ENCODE measurements at regions of chr17 and their contacts with region 1.

Region 1: DNA sequence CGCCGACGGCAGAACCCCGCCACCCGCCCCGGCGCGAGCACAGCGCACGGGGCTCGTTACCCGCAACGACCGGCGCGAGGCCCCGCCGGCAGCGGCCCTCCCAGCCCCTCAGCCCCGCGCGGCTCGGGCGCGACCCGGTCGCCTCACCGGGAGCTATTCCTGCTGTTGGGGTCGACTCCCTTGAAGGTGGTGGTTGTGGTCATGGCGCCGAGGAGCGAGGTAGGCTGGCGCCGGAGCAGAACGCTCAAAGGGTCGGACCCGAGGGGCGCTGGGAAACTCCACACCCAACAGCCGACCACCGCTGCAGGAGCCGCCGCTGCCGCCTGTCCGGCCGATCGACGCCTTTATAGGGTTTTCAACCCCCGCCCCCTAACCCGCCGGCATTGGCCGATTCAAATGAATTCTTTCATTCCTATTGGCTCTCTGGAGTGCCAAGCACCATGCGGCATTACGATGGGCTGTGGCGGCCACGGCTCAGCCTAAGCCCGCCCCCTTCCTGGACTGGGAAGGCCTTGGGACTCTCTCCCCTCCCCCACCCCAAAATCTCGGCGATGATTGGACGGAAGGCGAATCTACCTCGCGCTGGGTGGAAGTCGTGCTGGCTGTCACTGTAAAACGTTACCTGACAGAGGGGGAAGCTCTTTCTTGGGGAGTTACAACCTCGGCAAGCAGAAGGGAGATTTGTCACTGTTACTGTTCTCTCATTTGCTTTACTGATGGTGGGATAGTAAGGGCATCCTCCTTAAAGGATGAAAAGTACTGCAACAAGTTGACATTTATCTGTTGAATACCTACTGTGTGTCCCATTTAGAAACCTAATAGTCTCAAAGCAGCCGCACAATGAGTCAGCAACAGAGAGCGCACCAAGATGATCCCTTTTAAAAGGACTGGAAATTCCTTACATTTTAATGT is at the start of gene JPT1:
- DNase-seq: peak; percentile 99
- ATAC-seq: peak; percentile 96
- H3K4me3 ChIP-seq: peak within 1 kb of the TSS; percentile 85 to 99 (median 95)
- H3K27ac ChIP-seq: peak within 1 kb of the TSS; percentile 76
- H3K4me1 ChIP-seq: peaks cover 54% of the 10 kb centered on the region
- H3K27me3 ChIP-seq: no peaks in the 10 kb centered on the region; a peak in 1 of 5 replicates
- CTCF ChIP-seq: peak; percentile 24; the same call in 1 of the 2 replicates
- EP300 ChIP-seq: peak in 1 of 2 experiments; percentile 34; a peak in 2 of 4 replicates
- POLR2A ChIP-seq: peak; percentile 100
- RAD21 ChIP-seq: peak; percentile 78
- total RNA-seq, gene JPT1: 237 and 256 TPM in 2 replicates

Region 2: GRCh38 chr17:75131280-75132017 is 23.0 kb before region 1 on chr17 and contains the start of gene NT5C:
- CTCF ChIA-PET with region 1: no interaction called
- POLR2A ChIA-PET with region 1: interaction called, 23 read pairs
- in situ Hi-C with region 1: no loop called
- intact Hi-C with region 1: no loop called
- DNase-seq: peak; percentile 79
- ATAC-seq: peak; percentile 91
- H3K4me3 ChIP-seq: peak within 1 kb of the TSS; percentile 77 to 96 (median 83)
- H3K27ac ChIP-seq: peak within 1 kb of the TSS; percentile 86
- H3K4me1 ChIP-seq: peaks cover 26% of the 10 kb centered on the region
- H3K27me3 ChIP-seq: no peaks in the 10 kb centered on the region
- CTCF ChIP-seq: peak; percentile 87
- EP300 ChIP-seq: peak in 1 of 2 experiments; percentile 13; a peak in 1 of 4 replicates
- POLR2A ChIP-seq: peak; percentile 85 to 94
- RAD21 ChIP-seq: peak; percentile 91
- total RNA-seq, gene NT5C: 31.4 and 48.6 TPM in 2 replicates

Region 3: GRCh38 chr17:75173526-75173925 is 19.1 kb after region 1 on chr17:
- CTCF ChIA-PET with region 1: interaction called, 6 read pairs
- POLR2A ChIA-PET with region 1: interaction called, 13 read pairs
- in situ Hi-C with region 1: no loop called
- intact Hi-C with region 1: no loop called
- DNase-seq: no peak
- ATAC-seq: no peak
- H3K4me3 ChIP-seq: no peak overlapping the region
- H3K27ac ChIP-seq: no peak overlapping the region
- H3K4me1 ChIP-seq: no peaks in the 10 kb centered on the region
- H3K27me3 ChIP-seq: no peaks in the 10 kb centered on the region
- CTCF ChIP-seq: no peak
- EP300 ChIP-seq: no peak
- POLR2A ChIP-seq: no peak
- RAD21 ChIP-seq: no peak

Region 4: GRCh38 chr17:75182569-75183450 is 28.4 kb after region 1 on chr17 and contains the start of gene SUMO2:
- CTCF ChIA-PET with region 1: no interaction called
- POLR2A ChIA-PET with region 1: interaction called, 13 read pairs
- in situ Hi-C with region 1: no loop called
- intact Hi-C with region 1: no loop called
- DNase-seq: peak; percentile 84
- ATAC-seq: peak; percentile 84
- H3K4me3 ChIP-seq: peak within 1 kb of the TSS; percentile 92 to 98 (median 96)
- H3K27ac ChIP-seq: peak within 1 kb of the TSS; percentile 96
- H3K4me1 ChIP-seq: peaks cover 47% of the 10 kb centered on the region
- H3K27me3 ChIP-seq: no peaks in the 10 kb centered on the region; a peak in 1 of 5 replicates
- CTCF ChIP-seq: peak; percentile 12; the same call in 1 of the 2 replicates
- EP300 ChIP-seq: peak in 1 of 2 experiments; percentile 44; a peak in 3 of 4 replicates
- POLR2A ChIP-seq: peak; percentile 76 to 82
- RAD21 ChIP-seq: peak; percentile 61; the same call in 1 of the 2 replicates
- total RNA-seq, gene SUMO2: 553 and 842 TPM in 2 replicates

Region 5: DNA sequence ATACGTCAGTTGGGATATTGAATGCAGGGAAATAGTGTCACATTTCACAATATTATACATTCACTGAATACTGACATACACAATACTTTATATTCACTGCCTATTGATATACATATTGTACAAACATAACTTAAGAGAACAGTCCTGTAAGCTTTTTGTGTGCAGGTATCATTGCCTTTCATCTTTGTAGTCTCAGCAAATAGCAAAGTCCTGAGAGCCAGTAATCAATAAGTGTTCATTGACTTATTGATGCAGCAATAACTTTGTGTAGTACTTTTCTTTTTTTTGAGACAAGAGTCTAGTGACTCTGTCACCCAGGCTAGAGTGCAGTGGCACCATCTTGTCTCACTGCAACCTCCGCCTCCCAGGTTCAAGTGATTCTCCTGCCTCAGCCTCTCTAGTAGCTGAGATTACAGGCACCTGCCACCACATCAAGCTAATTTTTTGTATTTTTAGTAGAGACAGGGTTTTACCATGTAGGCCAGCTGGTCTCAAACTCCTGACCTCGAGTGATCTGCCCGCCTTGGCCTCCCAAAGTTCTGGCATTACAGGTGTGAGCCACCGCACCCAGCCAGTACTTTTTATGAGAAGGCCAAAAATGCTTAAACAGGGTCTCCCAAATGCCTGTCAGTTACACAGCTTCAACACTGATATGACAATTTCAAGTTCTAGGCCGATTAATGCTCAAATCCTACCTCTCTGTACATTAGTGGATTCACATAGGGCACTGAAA is 45.6 kb after region 1 on chr17:
- CTCF ChIA-PET with region 1: no interaction called
- POLR2A ChIA-PET with region 1: interaction called, 10 read pairs
- in situ Hi-C with region 1: no loop called
- intact Hi-C with region 1: loop called (anchors 5 kb)
- DNase-seq: peak; percentile 53
- ATAC-seq: peak; percentile 30
- H3K4me3 ChIP-seq: peak overlapping the region in 1 of 3 experiments; percentile 59; a peak in 2 of 6 replicates
- H3K27ac ChIP-seq: peak overlapping the region; percentile 62
- H3K4me1 ChIP-seq: peaks cover 43% of the 10 kb centered on the region
- H3K27me3 ChIP-seq: no peaks in the 10 kb centered on the region
- CTCF ChIP-seq: no peak
- EP300 ChIP-seq: peak in 1 of 2 experiments; percentile 81; a peak in 1 of 4 replicates
- POLR2A ChIP-seq: no peak
- RAD21 ChIP-seq: no peak

Region 6: GRCh38 chr17:75352079-75352569 is 197.7 kb after region 1 on chr17:
- CTCF ChIA-PET with region 1: no interaction called
- POLR2A ChIA-PET with region 1: no interaction called
- in situ Hi-C with region 1: no loop called
- intact Hi-C with region 1: no loop called
- DNase-seq: no peak
- ATAC-seq: peak; percentile 14; the same call in 1 of the 3 replicates
- H3K4me3 ChIP-seq: no peak overlapping the region
- H3K27ac ChIP-seq: no peak overlapping the region
- H3K4me1 ChIP-seq: peaks cover 74% of the 10 kb centered on the region
- H3K27me3 ChIP-seq: no peaks in the 10 kb centered on the region
- CTCF ChIP-seq: no peak
- EP300 ChIP-seq: no peak
- POLR2A ChIP-seq: no peak
- RAD21 ChIP-seq: no peak